ENCODE measurements at regions of chr1 and their contacts with region 1.

Region 1: GRCh38 chr1:45583264-45583665 is 576 bp upstream of the NASP start:
- DNase-seq: peak; percentile 99
- H3K4me3 ChIP-seq: peak overlapping the region; percentile 62 to 81 (median 67)
- H3K27ac ChIP-seq: peak overlapping the region; percentile 78
- H3K4me1 ChIP-seq: peaks cover 17% of the 10 kb centered on the region
- H3K27me3 ChIP-seq: no peaks in the 10 kb centered on the region
- CTCF ChIP-seq: no peak
- POLR2A ChIP-seq: no peak

Region 2: GRCh38 chr1:45521398-45522323 is 61.6 kb before region 1 on chr1 and contains the start of gene PRDX1:
- CTCF ChIA-PET with region 1: no interaction called
- POLR2A ChIA-PET with region 1: interaction called, 21 read pairs
- dilution Hi-C with region 1: no loop called
- intact Hi-C with region 1: no loop called
- DNase-seq: peak; percentile 96
- H3K4me3 ChIP-seq: peak within 1 kb of the TSS; percentile 79 to 86 (median 80)
- H3K27ac ChIP-seq: peak within 1 kb of the TSS; percentile 87
- H3K4me1 ChIP-seq: peaks cover 19% of the 10 kb centered on the region
- H3K27me3 ChIP-seq: no peaks in the 10 kb centered on the region
- CTCF ChIP-seq: no peak
- POLR2A ChIP-seq: peak; percentile 100
- total RNA-seq, gene PRDX1: 681 and 685 TPM in 2 replicates

Region 3: DNA sequence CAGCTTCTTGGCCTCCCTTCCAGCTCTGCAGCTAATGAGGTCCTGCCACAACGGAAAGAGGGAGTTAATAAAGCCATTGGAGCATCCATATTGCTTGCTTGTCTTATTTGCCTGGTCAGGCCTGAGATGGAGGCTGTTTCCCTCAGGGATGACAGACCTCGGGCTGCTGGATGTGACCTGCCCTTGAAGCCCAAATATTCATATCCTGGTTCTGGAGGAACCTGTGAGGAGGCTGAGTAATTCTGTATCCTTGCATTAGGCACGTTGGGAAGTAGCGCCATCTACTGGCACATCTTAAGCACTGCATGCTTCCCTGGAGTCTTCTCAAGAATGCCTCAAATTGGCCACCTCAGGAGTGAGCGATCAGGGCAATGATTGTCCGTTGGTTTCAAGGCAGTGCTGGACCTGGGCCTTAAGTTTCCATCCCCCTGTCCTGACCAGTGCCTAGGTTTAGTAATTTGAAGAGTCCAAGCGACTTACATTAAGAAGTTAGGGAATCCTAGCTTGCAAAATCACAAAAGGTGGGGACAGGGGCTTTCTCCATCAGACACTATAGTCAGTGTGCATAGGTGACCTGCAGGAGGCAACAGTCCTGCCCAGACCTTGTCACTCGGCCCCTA is 13.2 kb before region 1 on chr1:
- CTCF ChIA-PET with region 1: interaction called, 17 read pairs
- POLR2A ChIA-PET with region 1: interaction called, 6 read pairs
- dilution Hi-C with region 1: no loop called
- intact Hi-C with region 1: no loop called
- DNase-seq: peak; percentile 81
- H3K4me3 ChIP-seq: no peak overlapping the region
- H3K27ac ChIP-seq: no peak overlapping the region
- H3K4me1 ChIP-seq: no peaks in the 10 kb centered on the region
- H3K27me3 ChIP-seq: no peaks in the 10 kb centered on the region
- CTCF ChIP-seq: peak; percentile 89 to 95
- POLR2A ChIP-seq: no peak

Region 4: GRCh38 chr1:45621501-45621836 is 38.2 kb after region 1 on chr1:
- CTCF ChIA-PET with region 1: no interaction called
- POLR2A ChIA-PET with region 1: no interaction called
- dilution Hi-C with region 1: no loop called
- intact Hi-C with region 1: loop called (anchors 2 kb)
- DNase-seq: peak; percentile 33
- H3K4me3 ChIP-seq: no peak overlapping the region
- H3K27ac ChIP-seq: no peak overlapping the region
- H3K4me1 ChIP-seq: peaks cover 54% of the 10 kb centered on the region
- H3K27me3 ChIP-seq: no peaks in the 10 kb centered on the region
- CTCF ChIP-seq: no peak
- POLR2A ChIP-seq: no peak

Region 5: DNA sequence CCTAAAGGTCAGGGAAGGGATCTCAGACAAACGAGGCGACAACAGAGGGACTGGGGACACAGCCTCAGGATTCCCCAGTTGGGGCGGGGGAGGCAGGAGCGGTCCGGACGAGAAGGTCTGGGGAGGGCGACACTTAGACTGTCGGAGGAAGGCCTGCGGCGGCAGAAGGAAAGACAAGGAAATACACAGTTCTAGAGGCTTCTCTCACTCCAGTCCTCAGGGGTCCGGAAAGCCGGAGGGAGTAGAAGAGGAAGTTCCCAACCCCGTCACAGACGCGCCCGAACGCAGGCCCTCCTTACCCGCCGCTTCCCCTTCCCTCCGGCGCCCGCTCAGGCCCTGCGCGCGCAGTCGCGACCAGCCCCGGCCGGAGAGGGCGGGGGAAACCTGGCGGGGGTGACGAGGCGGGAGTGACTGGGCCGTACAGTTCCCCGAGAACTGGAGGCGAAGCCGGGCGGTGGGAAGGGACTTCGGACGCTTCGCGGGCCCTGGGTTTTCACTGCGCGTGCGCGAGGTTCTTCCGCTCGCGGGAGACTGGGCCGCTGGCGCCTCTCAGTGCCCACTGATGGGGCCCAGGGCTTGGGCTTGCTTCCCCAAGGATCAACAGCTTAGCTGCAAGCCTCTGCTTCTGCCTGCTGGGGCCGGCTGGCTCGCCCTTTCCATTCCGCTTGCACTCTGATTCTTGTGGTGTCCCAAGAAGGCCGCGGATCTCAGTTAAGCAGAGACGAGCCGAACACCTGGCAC is 167.2 kb after region 1 on chr1 and contains the start of gene IPP:
- CTCF ChIA-PET with region 1: no interaction called
- POLR2A ChIA-PET with region 1: no interaction called
- dilution Hi-C with region 1: no loop called
- intact Hi-C with region 1: loop called (anchors 1 kb)
- DNase-seq: peak; percentile 99
- H3K4me3 ChIP-seq: peak within 1 kb of the TSS; percentile 65 to 83 (median 81)
- H3K27ac ChIP-seq: peak within 1 kb of the TSS; percentile 97
- H3K4me1 ChIP-seq: peaks cover 8% of the 10 kb centered on the region
- H3K27me3 ChIP-seq: no peaks in the 10 kb centered on the region
- CTCF ChIP-seq: peak in 1 of 2 donors; percentile 11
- POLR2A ChIP-seq: peak; percentile 98
- total RNA-seq, gene IPP: 6.3 and 7.2 TPM in 2 replicates

Region 6: DNA sequence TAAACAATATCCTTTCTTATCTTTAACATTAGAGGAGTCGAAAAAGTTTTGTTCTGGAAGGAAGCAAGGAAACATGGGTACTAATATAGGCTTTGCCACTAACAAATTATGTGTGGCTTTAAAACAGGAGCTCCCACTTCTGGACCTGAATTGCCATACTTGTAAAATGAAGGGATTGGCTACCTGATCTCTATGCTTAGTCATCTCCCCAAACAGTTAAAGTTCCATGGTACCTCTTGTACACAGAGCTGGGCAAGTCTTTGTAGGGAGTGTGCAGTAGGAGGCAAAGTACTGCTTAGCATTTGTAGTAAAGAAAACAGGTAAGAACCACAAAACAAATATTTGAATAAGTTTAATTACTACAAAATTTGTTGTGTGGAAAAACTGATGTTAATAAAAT is 301.4 kb after region 1 on chr1:
- CTCF ChIA-PET with region 1: no interaction called
- POLR2A ChIA-PET with region 1: no interaction called
- dilution Hi-C with region 1: no loop called
- intact Hi-C with region 1: loop called (anchors 1 kb)
- DNase-seq: no peak
- H3K4me3 ChIP-seq: no peak overlapping the region
- H3K27ac ChIP-seq: no peak overlapping the region
- H3K4me1 ChIP-seq: no peaks in the 10 kb centered on the region
- H3K27me3 ChIP-seq: no peaks in the 10 kb centered on the region
- CTCF ChIP-seq: no peak
- POLR2A ChIP-seq: no peak